CD4-positive, alpha-beta memory T cell (primary cell): ENCODE measurements at regions of chr2 and their contacts with region 1.

Region 1: DNA sequence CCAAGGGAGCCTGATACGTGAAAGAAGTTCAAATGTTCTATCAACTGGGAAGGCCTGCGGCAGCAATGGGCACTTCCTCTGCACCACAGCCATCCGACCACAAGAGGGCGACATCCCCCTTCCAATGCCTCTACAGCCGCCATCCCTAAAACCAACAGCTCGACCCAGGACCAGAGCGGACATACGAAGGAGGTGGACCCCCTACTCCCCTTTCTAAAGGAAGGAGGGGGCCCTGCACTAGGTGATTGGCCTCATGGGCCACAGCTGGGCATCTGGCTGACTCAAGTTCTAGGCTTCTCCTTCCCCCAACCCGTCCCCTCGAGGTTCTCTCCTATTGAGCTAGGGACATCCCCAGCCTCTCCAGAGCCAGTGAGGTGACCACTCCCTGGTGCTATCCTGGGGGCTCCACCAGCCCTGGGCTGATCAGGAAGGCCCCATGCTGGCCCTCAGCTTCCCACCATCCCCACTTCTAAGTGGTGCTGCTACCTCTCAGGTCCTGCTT is 217.2 kb downstream of the TNS1 start:
- DNase-seq: peak in 4 of 5 donors; percentile 53 to 65 (median 59)
- H3K4me3 ChIP-seq: no peak overlapping the region
- H3K4me3 Mint-ChIP-seq: peak overlapping the region in 3 of 8 donors; percentile 24 to 43 (median 40)
- H3K27ac ChIP-seq: no peak overlapping the region
- H3K27ac Mint-ChIP-seq: peak overlapping the region in 3 of 7 donors; percentile 5 to 64 (median 52)
- H3K4me1 ChIP-seq: peaks cover 21% of the 10 kb centered on the region
- H3K4me1 Mint-ChIP-seq: peaks cover 13 to 37% (median 28%) of the 10 kb centered on the region in 4 donors
- H3K27me3 ChIP-seq: no peaks in the 10 kb centered on the region
- H3K27me3 Mint-ChIP-seq: no peaks in the 10 kb centered on the region

Region 2: DNA sequence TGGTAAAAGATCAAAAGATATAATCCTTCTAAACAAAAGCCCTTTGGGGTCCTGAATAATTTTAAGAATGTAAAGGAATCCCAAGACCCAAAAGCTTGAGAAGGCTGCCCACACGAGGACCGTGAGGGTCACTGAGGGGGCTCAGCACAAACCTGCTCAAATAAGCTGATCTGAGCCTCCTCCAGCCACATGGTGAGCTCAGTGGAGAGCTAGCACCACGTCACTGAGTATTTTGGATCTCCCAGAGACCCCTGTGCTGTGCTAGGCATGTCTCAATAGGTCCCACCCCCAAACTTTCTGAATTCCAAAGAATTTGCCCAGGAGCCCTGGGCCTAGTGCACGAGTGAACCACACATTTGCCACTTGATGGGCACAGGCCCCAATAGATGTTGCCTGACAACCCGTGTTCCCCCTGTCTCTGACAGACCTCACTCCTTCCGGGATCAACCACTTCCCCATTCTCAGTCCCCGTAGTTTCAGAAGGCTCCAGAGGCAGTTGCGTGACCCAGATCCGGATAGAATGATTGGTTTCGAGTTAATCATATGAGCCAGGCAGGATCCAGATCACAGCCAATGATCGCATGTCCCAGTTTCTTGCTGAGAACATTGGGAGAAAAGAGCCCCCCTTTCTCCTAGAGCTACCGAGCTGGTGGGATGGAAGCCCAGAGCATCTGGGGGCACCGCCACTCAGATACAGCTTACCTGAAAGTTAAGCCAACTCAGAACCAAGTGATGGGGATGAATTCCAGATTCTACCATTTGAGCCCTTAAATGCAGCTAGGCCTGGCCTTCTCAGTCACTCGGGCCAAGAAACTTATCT is 13.4 kb after region 1 on chr2:
- CTCF ChIA-PET with region 1: interaction called, 74 read pairs
- POLR2A ChIA-PET with region 1: no interaction called
- intact Hi-C with region 1: no loop called
- DNase-seq: no peak
- H3K4me3 ChIP-seq: no peak overlapping the region
- H3K4me3 Mint-ChIP-seq: no peak overlapping the region
- H3K27ac ChIP-seq: no peak overlapping the region
- H3K27ac Mint-ChIP-seq: no peak overlapping the region
- H3K4me1 ChIP-seq: no peaks in the 10 kb centered on the region
- H3K4me1 Mint-ChIP-seq: no peaks in the 10 kb centered on the region
- H3K27me3 ChIP-seq: no peaks in the 10 kb centered on the region
- H3K27me3 Mint-ChIP-seq: no peaks in the 10 kb centered on the region

Region 3: DNA sequence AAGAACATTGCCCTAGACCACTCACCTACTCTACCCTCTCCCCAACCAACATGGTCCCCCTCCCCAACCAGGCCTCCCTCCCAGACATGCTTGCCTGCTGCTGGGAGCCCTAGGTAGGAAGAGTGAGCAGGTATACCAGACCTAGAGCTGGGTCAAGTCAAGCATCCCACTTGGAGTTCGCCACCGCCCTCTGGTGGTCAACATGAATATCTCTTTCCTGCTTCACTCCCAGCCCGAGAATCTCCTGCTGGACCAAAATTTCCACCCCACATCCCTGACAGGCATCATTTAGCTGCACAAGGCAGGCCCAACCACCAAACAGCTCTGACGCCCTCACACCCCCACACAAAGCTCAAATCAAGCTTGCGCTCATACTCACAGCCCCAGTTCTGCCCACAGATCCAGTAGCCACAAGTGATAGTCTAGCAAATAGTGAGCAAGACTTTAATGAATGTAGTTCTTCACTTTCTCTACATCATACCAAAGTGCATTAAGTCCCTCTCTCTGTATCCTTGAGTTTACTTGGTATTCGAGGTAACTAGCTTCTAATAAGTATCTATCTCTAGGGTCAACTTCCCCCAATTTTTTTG is 101.2 kb after region 1 on chr2:
- CTCF ChIA-PET with region 1: interaction called, 84 read pairs
- POLR2A ChIA-PET with region 1: interaction called, 8 read pairs
- intact Hi-C with region 1: loop called (anchors 1 kb)
- DNase-seq: peak; percentile 41 to 54 (median 43)
- H3K4me3 ChIP-seq: no peak overlapping the region
- H3K4me3 Mint-ChIP-seq: no peak overlapping the region
- H3K27ac ChIP-seq: no peak overlapping the region
- H3K27ac Mint-ChIP-seq: no peak overlapping the region
- H3K4me1 ChIP-seq: no peaks in the 10 kb centered on the region
- H3K4me1 Mint-ChIP-seq: peaks cover 0 to 4% (median 3%) of the 10 kb centered on the region in 4 donors
- H3K27me3 ChIP-seq: no peaks in the 10 kb centered on the region
- H3K27me3 Mint-ChIP-seq: peaks cover 4 to 6% of the 10 kb centered on the region in 2 donors

Region 4: GRCh38 chr2:217993817-217994463 is 208.3 kb after region 1 on chr2:
- CTCF ChIA-PET with region 1: interaction called, 17 read pairs
- POLR2A ChIA-PET with region 1: no interaction called
- intact Hi-C with region 1: no loop called
- DNase-seq: peak in 4 of 5 donors; percentile 17 to 24 (median 18)
- H3K4me3 ChIP-seq: no peak overlapping the region
- H3K4me3 Mint-ChIP-seq: no peak overlapping the region
- H3K27ac ChIP-seq: no peak overlapping the region
- H3K27ac Mint-ChIP-seq: no peak overlapping the region
- H3K4me1 ChIP-seq: no peaks in the 10 kb centered on the region
- H3K4me1 Mint-ChIP-seq: peaks cover 0 to 1% (median 0%) of the 10 kb centered on the region in 4 donors
- H3K27me3 ChIP-seq: no peaks in the 10 kb centered on the region
- H3K27me3 Mint-ChIP-seq: peaks cover 4 to 17% of the 10 kb centered on the region in 2 donors

Region 5: GRCh38 chr2:218063486-218063885 is 277.9 kb after region 1 on chr2:
- CTCF ChIA-PET with region 1: interaction called, 9 read pairs
- POLR2A ChIA-PET with region 1: no interaction called
- intact Hi-C with region 1: loop called (anchors 1 kb)
- DNase-seq: no peak
- H3K4me3 ChIP-seq: no peak overlapping the region
- H3K4me3 Mint-ChIP-seq: no peak overlapping the region
- H3K27ac ChIP-seq: no peak overlapping the region
- H3K27ac Mint-ChIP-seq: peak overlapping the region in 1 of 7 donors; percentile 33
- H3K4me1 ChIP-seq: peaks cover 1% of the 10 kb centered on the region
- H3K4me1 Mint-ChIP-seq: peaks cover 0 to 2% (median 1%) of the 10 kb centered on the region in 4 donors
- H3K27me3 ChIP-seq: no peaks in the 10 kb centered on the region
- H3K27me3 Mint-ChIP-seq: peaks cover 14 to 38% of the 10 kb centered on the region in 2 donors